Head of caudate nucleus (tissue), 42 donors: ENCODE measurements at regions of chr19 and their contacts with region 1.

Region 1: GRCh38 chr19:29811125-29812079 is at the start of gene CCNE1:
- DNase-seq: peak; percentile 71 to 97 (median 93)

Region 2: GRCh38 chr19:29745253-29745652 is 66.1 kb before region 1 on chr19:
- intact Hi-C with region 1: no loop called
- DNase-seq: no peak

Region 3: DNA sequence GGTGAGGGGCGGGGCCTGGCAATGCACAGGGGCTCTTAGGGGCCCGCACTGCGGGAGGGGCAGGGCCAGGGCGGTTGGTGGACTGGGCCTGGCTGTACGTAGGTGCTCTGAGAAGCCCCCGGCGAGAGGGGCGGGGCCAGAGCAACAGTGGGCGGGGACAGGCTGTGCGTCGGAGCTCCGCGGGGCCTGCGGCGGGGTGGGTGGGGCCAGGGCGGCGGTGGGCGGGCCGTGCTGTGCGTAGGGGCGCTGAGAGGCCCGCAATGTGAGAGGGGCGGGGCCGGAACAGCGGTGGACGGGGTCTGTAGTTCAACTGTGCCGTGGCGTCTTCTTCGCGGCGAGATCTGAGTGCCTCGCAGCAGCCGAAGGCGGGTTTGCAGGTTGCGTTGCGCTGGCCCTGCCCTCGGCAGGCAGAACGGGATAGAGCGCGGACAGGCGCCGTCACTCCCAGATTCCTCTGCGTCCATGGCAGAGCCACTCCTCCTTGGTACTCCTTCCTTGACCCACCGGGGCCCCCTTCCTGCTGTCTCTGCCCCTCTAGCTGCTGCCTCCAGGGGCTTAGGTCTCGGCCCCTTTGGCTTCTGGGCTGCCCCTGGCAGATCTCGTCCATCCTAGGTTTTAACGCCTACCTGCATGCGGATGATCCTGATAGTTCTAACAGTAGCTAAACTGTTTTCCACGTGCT is 33.6 kb after region 1 on chr19:
- intact Hi-C with region 1: loop called (anchors 2 kb)
- DNase-seq: peak; percentile 75 to 96 (median 90)

Region 4: GRCh38 chr19:29941828-29942403 is 130.5 kb after region 1 on chr19 and contains the start of gene URI1:
- intact Hi-C with region 1: loop called (anchors 10 kb)
- DNase-seq: peak; percentile 74 to 97 (median 94)